ENCODE measurements at regions of chr4 and their contacts with region 1.

Region 1: GRCh38 chr4:52103319-52103718 is 52.2 kb downstream of the SPATA18 start:
- DNase-seq: peak; percentile 56
- H3K4me3 ChIP-seq: no peak overlapping the region
- H3K27ac ChIP-seq: no peak overlapping the region
- H3K4me1 ChIP-seq: peaks cover 32% of the 10 kb centered on the region
- H3K27me3 ChIP-seq: no peaks in the 10 kb centered on the region

Region 2: DNA sequence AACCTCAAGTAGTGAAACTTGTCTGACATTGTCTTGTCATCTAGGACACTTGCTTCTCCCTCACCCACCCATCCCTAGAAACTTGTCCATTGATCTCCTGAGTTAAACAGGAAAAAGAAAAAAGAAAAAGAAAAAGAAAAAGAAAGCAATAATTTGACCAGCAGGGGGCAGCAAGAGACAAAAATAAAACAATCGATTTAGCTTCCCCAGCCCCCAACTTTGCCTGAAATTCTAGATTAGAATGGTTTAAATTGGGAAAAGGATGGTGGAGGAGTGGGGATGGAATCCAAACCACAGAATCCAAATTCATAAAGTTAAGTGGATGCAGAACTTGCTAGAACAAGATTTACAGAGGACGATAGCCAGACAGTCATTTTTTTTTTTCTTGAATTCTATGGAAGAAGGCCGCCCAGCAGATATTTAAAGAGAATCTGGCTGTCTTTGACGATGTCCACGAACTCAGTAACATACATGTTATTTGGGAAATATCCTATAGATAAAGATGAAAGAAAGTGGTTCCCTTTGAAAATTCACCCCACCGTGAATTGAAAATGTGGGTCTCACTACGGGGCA is 272.9 kb after region 1 on chr4:
- in situ Hi-C with region 1: loop called (anchors 25 kb)
- DNase-seq: peak; percentile 73
- H3K4me3 ChIP-seq: no peak overlapping the region
- H3K27ac ChIP-seq: no peak overlapping the region
- H3K4me1 ChIP-seq: no peaks in the 10 kb centered on the region
- H3K27me3 ChIP-seq: peaks cover 21% of the 10 kb centered on the region

Region 3: GRCh38 chr4:52507774-52508173 is 404.5 kb after region 1 on chr4:
- in situ Hi-C with region 1: loop called (anchors 25 kb)
- DNase-seq: no peak
- H3K4me3 ChIP-seq: no peak overlapping the region
- H3K27ac ChIP-seq: no peak overlapping the region
- H3K4me1 ChIP-seq: no peaks in the 10 kb centered on the region
- H3K27me3 ChIP-seq: no peaks in the 10 kb centered on the region

Region 4: GRCh38 chr4:52996261-52996892 is 893.1 kb after region 1 on chr4:
- in situ Hi-C with region 1: loop called (anchors 10 kb)
- DNase-seq: peak; percentile 82
- H3K4me3 ChIP-seq: no peak overlapping the region
- H3K27ac ChIP-seq: peak overlapping the region; percentile 53
- H3K4me1 ChIP-seq: peaks cover 23% of the 10 kb centered on the region
- H3K27me3 ChIP-seq: no peaks in the 10 kb centered on the region